ENCODE measurements at regions of chr11 and their contacts with region 1.

Region 1: DNA sequence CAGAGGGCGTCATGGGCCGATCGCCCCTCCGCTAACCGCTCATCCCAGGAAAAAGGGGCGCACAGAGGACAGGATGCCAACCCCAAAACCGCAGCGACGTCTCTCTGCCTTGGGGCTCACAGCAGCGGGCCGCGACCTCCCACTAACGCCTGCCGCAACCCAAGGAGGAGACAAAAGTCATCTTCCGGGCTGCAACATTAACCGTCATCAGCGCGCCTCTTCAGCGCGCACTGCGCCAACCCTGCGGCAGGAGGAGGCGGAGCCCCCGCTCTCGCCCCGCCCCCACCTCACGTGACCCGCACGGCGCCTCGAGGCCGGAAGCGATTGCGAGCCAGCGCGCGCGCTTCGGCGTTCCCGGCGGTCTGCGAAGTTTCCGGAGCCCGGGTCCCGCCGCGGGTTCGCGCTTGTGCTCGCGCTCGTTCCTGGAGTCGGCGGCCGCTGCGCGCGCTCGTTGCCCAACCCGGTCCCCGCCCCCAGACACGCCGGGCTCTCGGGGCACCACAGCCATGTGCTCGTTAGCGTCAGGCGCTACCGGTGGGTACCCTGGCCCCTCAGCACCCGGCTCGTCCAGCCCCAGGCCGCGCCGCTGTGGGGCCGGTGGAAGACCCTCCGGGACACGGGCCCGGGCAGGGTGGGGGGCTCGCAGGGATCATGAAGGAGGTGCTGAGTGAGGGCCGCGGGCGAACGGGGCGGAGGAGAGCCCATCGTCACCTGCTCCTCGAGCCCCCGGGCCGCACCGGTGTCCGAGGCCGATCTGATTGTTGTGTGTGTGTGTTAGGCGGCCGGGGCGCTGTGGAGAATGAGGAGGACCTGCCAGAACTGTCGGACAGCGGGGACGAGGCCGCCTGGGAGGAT is at the start of gene PRMT3:
- DNase-seq: peak; percentile 66 to 97
- H3K4me3 ChIP-seq: peak within 1 kb of the TSS; percentile 84 to 88
- H3K27ac ChIP-seq: peak within 1 kb of the TSS; percentile 86 to 91
- H3K4me1 ChIP-seq: peaks cover 0 to 5% of the 10 kb centered on the region in 2 donors
- H3K27me3 ChIP-seq: no peaks in the 10 kb centered on the region
- CTCF ChIP-seq: peak in 2 of 3 experiments; percentile 96 to 97
- total RNA-seq, gene PRMT3: 1.2 TPM

Region 2: DNA sequence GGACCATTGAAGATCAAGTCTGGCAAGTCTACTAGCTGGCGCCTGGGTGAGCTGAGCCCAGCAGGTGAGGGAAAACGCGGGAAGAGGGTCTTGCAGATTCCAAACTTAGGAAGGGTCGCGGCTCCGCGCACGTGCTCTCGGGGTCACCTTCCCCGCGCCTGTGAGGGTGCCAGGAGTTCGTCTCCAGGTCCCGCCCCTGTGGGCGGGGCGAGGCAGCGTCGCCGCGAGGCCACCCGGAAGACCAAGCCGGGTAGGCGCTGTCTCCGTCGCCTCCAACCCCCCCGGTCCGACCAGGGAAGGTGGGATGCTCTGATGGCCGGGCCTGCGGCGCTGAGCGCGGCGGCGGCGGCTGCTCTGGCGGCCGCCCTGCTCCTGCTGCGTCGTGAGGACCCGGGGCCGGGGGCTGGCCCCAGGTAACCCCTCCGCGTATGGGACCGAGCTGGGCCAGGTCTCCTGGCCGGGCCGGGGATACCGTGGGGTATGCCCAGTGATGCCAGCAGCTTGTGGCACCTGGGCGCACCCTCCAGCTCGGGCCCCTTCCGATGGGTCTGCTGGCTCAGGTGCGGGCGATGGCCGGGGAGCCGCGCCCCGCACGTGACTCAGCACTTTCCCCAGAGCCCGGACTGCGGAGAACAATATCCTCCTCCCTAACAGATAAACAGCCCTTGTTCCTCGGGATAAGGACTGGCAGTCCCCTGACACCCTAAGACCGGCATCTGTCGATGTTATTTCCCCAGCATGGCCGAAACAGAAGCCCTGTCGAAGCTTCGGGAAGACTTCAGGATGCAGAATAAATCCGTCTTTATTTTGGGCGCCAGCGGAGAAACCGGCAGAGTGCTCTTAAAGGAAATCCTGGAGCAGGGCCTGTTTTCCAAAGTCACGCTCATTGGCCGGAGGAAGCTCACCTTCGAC is 23.7 kb before region 1 on chr11 and contains the start of gene HTATIP2:
- intact Hi-C with region 1: loop called (anchors 1 kb)
- DNase-seq: peak in 1 of 2 donors; percentile 82
- H3K4me3 ChIP-seq: peak within 1 kb of the TSS; percentile 91 to 99
- H3K27ac ChIP-seq: peak within 1 kb of the TSS; percentile 78 to 95
- H3K4me1 ChIP-seq: peaks cover 4 to 14% of the 10 kb centered on the region in 2 donors
- H3K27me3 ChIP-seq: no peaks in the 10 kb centered on the region
- CTCF ChIP-seq: no peak
- total RNA-seq, gene HTATIP2: 34.6 TPM

Region 3: DNA sequence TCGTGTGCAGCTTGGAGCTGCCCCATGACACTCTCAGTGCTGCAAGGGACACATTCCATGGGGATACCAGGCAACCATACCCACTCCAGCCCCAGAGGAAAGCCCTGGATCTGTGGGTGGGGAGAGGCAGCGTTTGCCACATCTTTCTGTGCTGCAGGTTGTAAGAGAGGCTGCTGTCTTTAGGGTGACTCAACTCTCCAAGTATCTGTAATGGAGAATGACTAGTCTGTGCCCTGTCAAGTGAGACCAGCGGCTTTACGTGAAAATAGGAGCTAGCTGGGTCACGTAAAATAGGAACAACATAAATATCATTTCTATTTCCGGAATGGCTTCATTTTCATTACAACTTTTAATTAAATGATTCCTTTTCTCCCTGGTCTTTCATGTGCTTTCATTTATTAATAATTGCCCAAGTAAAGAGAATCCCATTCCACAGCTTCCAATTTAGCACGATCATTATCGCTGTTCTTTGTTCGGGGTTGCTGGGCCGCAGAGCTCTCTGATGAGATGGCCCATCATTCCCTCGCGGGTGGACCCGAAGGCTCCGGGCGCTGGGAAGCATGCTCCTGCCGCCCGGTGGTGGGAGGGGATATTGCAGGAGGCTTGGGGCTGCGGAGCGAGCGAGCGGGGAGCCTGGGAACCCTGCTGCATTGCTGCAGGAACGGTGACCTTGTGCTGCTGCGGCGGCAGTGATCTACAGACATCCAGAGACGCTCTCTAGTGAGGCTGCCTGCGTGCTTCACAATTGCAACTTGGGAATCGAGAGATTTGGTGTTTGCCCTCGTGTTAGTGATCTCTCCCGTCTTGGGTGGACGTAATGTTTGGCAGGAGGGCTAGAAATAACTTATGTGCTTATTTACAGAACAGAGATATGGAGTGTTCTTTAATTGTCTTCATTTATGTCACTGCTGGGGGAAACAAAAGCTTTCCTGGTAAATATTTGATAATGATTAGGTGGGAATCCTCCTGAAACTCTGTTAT is 222.5 kb after region 1 on chr11:
- intact Hi-C with region 1: loop called (anchors 5 kb)
- DNase-seq: peak in 1 of 2 donors; percentile 74
- H3K4me3 ChIP-seq: no peak overlapping the region
- H3K27ac ChIP-seq: no peak overlapping the region
- H3K4me1 ChIP-seq: no peaks in the 10 kb centered on the region
- H3K27me3 ChIP-seq: no peaks in the 10 kb centered on the region
- CTCF ChIP-seq: peak; percentile 56 to 91 (median 84)

Measured in ascending aorta (tissue), 2 donors.